Dorsolateral prefrontal cortex (tissue), 120 donors: ENCODE measurements at regions of chr5 and their contacts with region 1.

Region 1: GRCh38 chr5:68343421-68343826 is 127.9 kb downstream of the PIK3R1 start:
- DNase-seq: peak in 5 of 10 donors; percentile 5 to 65 (median 34)
- H3K4me3 ChIP-seq: no peak overlapping the region
- H3K27ac ChIP-seq: peak overlapping the region in 20 of 59 donors; percentile 13 to 68 (median 50)
- H3K27me3 ChIP-seq: no peaks in the 10 kb centered on the region
- CTCF ChIP-seq: no peak

Region 2: DNA sequence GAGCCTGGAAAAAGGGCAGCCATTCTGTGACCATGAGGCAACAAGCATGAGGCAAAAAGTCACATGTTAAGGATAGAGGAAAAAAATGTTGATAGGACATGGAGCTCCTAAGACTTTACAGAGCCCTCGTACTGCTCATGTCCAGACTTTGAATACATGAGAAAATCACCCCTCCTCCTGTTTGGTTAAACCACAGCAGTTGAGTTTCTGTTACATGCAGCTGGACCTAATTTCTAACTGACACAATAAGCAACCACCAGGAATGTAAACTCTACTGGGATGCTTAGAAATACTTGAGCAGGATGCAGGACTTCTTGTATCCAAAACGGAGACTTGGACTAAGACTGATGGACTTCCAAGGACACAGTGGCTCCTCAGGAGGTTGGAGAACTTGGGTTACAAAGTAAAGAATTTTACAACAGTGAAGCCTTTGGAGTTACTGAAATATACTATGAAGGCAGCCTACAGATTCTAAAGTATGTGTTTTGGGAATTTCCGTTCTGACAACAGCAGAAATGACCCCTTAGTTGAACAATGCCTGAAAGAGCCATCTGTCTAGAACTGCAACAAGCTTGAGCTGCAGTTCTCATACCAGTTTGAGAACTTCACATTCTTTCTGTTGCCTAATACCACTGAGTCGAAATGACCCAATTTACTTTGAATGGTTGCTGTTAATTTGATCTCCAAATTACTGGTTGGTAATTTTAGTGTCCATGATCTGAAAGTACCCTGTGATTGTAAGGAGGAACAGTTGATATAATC is 141.1 kb after region 1 on chr5:
- intact Hi-C with region 1: loop called in 1 of 2 experiments (anchors 10 kb)
- DNase-seq: no peak
- H3K4me3 ChIP-seq: no peak overlapping the region
- H3K27ac ChIP-seq: peak overlapping the region in 11 of 59 donors; percentile 0 to 86 (median 43)
- H3K27me3 ChIP-seq: no peaks in the 10 kb centered on the region
- CTCF ChIP-seq: no peak

Region 3: GRCh38 chr5:69136293-69136692 is 792.9 kb after region 1 on chr5:
- intact Hi-C with region 1: no loop called
- DNase-seq: no peak
- H3K4me3 ChIP-seq: no peak overlapping the region
- H3K27ac ChIP-seq: no peak overlapping the region
- H3K27me3 ChIP-seq: no peaks in the 10 kb centered on the region
- CTCF ChIP-seq: no peak